AG04450 (cell line): ENCODE measurements at regions of chr1 and their contacts with region 1.

Region 1: DNA sequence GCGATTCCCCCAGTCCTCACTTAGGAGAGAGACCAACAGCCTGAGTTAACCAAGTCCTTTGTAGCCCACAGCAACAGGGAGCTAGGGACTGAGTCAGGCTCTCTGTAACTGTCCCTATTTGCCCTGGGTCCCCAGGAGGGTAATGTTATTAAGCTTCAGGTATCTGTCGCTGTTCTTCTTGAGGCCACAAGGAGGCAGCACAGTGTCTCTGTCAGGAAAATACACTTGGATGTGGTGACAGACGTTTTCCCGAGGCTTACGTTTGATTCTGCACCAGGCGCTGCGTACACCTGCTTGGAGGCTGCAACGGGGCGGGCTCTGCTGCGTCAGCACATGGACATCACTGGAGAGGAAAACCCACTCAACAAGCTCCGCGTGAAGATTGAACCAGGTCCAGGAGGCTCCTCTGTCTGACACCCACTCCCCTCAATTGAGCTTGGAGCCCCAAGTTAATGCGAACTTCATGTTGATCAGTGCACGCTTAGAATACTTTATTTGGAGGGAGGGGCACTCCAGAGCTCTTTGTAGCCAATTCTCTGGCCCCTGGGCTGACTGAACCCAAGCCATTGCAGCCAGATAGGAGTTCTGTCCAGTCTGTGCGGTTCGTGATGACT is 10.7 kb upstream of the ELF3 start:
- DNase-seq: no peak
- H3K4me3 ChIP-seq: no peak overlapping the region
- H3K27ac ChIP-seq: no peak overlapping the region
- H3K27me3 ChIP-seq: no peaks in the 10 kb centered on the region
- CTCF ChIP-seq: peak; percentile 77

Region 2: GRCh38 chr1:201732351-201732750 is 267.4 kb before region 1 on chr1:
- CTCF ChIA-PET with region 1: no interaction called
- POLR2A ChIA-PET with region 1: no interaction called
- DNase-seq: no peak
- H3K4me3 ChIP-seq: no peak overlapping the region
- H3K27ac ChIP-seq: peak overlapping the region; percentile 31
- H3K27me3 ChIP-seq: no peaks in the 10 kb centered on the region
- CTCF ChIP-seq: no peak

Region 3: GRCh38 chr1:201985355-201985754 is 14.4 kb before region 1 on chr1:
- CTCF ChIA-PET with region 1: interaction called, 11 read pairs
- POLR2A ChIA-PET with region 1: no interaction called
- DNase-seq: no peak
- H3K4me3 ChIP-seq: no peak overlapping the region
- H3K27ac ChIP-seq: no peak overlapping the region
- H3K27me3 ChIP-seq: no peaks in the 10 kb centered on the region
- CTCF ChIP-seq: no peak

Region 4: GRCh38 chr1:202112839-202113672 is 113.3 kb after region 1 on chr1:
- CTCF ChIA-PET with region 1: interaction called, 163 read pairs
- POLR2A ChIA-PET with region 1: no interaction called
- DNase-seq: no peak
- H3K4me3 ChIP-seq: no peak overlapping the region
- H3K27ac ChIP-seq: no peak overlapping the region
- H3K27me3 ChIP-seq: peaks cover 7% of the 10 kb centered on the region
- CTCF ChIP-seq: no peak

Region 5: DNA sequence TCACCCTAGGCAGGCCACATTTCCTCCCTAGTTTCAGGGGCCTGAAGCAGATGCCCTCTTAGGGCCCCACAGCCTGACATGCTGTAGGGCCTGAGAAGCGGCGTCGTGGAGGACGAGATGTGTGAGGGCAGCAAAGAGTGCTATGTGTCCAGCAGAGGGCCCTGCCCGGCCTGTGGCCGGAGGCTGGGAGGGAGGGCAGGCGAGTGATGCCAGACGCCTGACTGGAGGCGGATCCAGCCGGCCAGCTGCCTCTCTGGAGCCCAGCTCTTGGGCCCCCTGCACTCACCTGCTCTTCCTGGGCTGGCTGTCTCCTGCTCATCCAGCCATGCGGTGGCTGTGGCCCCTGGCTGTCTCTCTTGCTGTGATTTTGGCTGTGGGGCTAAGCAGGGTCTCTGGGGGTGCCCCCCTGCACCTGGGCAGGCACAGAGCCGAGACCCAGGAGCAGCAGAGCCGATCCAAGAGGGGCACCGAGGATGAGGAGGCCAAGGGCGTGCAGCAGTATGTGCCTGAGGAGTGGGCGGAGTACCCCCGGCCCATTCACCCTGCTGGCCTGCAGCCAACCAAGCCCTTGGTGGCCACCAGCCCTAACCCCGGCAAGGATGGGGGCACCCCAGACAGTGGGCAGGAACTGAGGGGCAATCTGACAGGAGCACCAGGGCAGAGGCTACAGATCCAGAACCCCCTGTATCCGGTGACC is 123.1 kb after region 1 on chr1 and contains the start of gene GPR37L1:
- CTCF ChIA-PET with region 1: interaction called, 163 read pairs
- POLR2A ChIA-PET with region 1: no interaction called
- DNase-seq: no peak
- H3K4me3 ChIP-seq: no peak within 1 kb of the TSS
- H3K27ac ChIP-seq: no peak within 1 kb of the TSS
- H3K27me3 ChIP-seq: peaks cover 26% of the 10 kb centered on the region
- CTCF ChIP-seq: peak; percentile 57
- polyA plus RNA-seq, gene GPR37L1: not detected in 2 replicates

Region 6: DNA sequence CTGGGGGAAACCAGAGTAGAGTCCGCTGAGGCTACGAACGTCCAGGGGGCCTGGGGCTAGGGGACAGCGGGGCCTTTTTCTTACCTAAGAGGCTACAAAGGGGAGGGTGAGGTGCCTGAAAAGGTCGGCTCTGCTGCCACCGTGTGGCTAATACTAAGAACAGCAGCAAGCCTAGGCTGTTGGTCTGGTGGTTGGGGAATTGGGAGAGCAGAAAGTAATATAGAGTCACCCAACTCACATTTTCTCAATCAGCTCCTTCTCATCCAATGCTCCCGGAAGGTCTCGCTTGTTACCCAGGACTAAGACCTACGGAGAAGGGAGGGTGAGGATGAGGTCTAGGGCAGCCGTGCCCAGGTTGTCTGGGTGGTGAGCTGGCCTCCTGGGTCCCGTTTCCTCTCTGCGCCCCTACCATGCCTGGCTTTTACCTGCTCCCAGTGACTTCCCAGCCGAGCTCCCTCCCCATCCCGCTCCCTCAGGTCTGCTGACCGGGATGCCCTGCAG is 135.5 kb after region 1 on chr1:
- CTCF ChIA-PET with region 1: interaction called, 22 read pairs
- POLR2A ChIA-PET with region 1: no interaction called
- DNase-seq: peak; percentile 30
- H3K4me3 ChIP-seq: no peak overlapping the region
- H3K27ac ChIP-seq: no peak overlapping the region
- H3K27me3 ChIP-seq: no peaks in the 10 kb centered on the region
- CTCF ChIP-seq: peak; percentile 85

Region 7: GRCh38 chr1:202144402-202145067 is 144.8 kb after region 1 on chr1 and contains the start of gene ARL8A:
- CTCF ChIA-PET with region 1: interaction called, 10 read pairs
- POLR2A ChIA-PET with region 1: no interaction called
- DNase-seq: no peak
- H3K4me3 ChIP-seq: peak within 1 kb of the TSS; percentile 83
- H3K27ac ChIP-seq: peak within 1 kb of the TSS; percentile 31
- H3K27me3 ChIP-seq: no peaks in the 10 kb centered on the region
- CTCF ChIP-seq: no peak
- polyA plus RNA-seq, gene ARL8A: 50.9 and 58.0 TPM in 2 replicates